ENCODE measurements at regions of chr16 and their contacts with region 1.

Region 1: GRCh38 chr16:3645504-3646347 is 8.8 kb upstream of the DNASE1 start:
- DNase-seq: peak; percentile 39 to 70
- H3K4me3 ChIP-seq: peak overlapping the region in 1 of 4 experiments; percentile 4; a peak in 2 of 8 replicates
- H3K27ac ChIP-seq: peak overlapping the region; percentile 71
- H3K4me1 ChIP-seq: peaks cover 11 to 25% (median 18%) of the 10 kb centered on the region in 4 experiments
- H3K27me3 ChIP-seq: no peaks in the 10 kb centered on the region
- CTCF ChIP-seq: no peak
- EP300 ChIP-seq: no peak
- POLR2A ChIP-seq: no peak; a peak in 1 of 3 replicates
- RAD21 ChIP-seq: no peak

Region 2: DNA sequence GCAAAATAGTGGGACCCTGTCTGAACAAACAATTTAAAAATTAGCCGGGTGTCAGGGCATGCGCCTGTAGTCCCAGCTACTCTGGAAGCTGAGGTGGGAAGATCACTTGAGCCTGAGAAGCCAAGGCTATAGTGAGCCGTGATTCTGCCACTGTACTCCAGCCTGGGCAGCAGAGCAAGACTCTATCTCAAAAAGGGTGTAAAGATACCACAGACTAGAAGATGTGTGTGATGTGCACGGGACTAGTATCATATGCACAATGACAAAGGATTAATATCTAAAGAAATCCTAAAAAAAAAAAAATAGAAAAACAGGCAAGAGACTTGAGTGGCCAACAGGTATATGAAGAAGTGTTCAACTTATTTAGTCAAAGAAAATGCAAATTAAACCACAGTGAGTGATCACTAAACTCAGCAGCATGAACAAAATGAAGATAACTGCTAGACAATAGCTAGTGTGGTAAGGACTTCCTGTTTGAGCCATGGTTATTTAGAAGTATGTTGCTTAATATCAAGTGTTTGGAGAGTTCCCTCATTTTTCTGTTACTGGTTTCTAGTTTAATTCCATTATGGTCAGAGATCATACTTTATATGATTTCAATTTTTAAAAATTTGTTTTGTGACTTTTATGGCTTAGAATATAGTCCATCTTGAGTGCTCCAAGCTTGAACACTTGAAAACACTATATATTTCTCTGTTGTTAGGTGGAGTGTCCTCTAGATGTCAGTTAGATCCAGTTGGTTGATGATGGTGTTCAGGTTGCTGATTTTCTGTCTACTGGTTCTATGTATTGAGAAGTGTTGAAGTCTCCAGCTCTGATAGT is 19.6 kb before region 1 on chr16:
- CTCF ChIA-PET with region 1: interaction called, 10 read pairs
- POLR2A ChIA-PET with region 1: interaction called, 3 read pairs
- DNase-seq: peak in 1 of 2 experiments; percentile 27
- H3K4me3 ChIP-seq: no peak overlapping the region
- H3K27ac ChIP-seq: no peak overlapping the region
- H3K4me1 ChIP-seq: peaks cover 0 to 3% (median 0%) of the 10 kb centered on the region in 4 experiments; a peak in 2 of 7 replicates
- H3K27me3 ChIP-seq: no peaks in the 10 kb centered on the region
- CTCF ChIP-seq: no peak
- EP300 ChIP-seq: no peak
- POLR2A ChIP-seq: no peak
- RAD21 ChIP-seq: no peak

Measured in H1 (cell line).